ENCODE measurements at regions of chr19 and their contacts with region 1.

Region 1: GRCh38 chr19:12139885-12140547 is at the start of gene ZNF20:
- DNase-seq: peak; percentile 95
- H3K4me3 ChIP-seq: peak within 1 kb of the TSS; percentile 66 to 99
- H3K27ac ChIP-seq: peak within 1 kb of the TSS; percentile 83 to 89
- H3K4me1 ChIP-seq: peaks cover 0 to 8% of the 10 kb centered on the region in 2 experiments; a peak in 1 of 4 replicates
- H3K27me3 ChIP-seq: no peaks in the 10 kb centered on the region
- CTCF ChIP-seq: no peak
- EP300 ChIP-seq: no peak
- RAD21 ChIP-seq: no peak
- polyA plus RNA-seq, gene ZNF20: 1.8 and 1.9 TPM in 2 replicates

Region 2: DNA sequence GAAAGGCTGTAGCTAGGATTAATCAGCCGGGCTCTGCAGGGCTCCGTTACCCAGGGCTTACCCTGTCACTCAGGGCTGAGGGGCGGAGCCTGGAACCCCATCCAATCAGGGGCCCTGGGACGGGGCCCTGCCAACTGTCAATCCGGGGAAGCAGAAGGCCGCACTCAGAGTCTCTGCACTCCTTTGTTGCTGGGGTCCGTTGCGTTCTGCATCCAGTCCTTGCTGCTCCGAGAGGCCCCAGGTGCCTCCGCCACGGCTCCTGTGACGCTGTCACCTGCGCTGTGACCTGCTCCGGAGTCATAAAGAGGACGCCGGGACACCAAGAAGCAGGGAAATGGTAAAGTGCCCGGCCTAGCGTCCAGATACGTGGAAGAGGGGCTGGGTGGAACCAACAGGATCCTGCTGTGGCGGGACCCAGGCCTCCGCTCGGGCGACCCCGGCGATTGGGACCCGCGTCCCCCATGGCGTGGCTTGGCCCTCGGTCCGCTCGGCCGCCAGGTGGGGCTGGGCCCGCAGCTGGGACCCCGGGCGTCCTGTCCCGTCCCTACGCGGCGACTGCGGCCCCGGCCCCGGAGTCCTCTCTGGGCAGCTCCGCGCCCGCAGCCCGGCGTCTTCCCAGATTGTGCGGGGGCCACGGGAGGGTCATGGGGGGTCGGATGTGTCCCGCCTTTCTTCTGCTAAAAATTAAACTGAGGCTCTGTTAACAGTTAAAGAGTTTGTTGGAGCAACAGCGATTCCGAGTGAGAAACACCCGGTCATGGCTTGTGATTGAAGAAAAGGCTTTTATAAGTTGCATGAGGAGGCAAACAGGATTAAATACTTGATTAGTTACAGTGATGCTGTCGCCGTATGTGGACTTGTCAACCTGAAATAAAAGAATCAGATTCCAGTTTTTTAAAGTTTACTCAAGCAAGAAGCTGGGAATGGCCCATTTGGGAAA is 341.4 kb before region 1 on chr19 and contains the start of gene ZNF491:
- CTCF ChIA-PET with region 1: interaction called, 14 read pairs
- POLR2A ChIA-PET with region 1: interaction called, 3 read pairs
- DNase-seq: peak; percentile 98
- H3K4me3 ChIP-seq: peak within 1 kb of the TSS; percentile 73 to 76
- H3K27ac ChIP-seq: peak within 1 kb of the TSS; percentile 44 to 81; a peak in 3 of 4 replicates
- H3K4me1 ChIP-seq: peaks cover 0 to 7% of the 10 kb centered on the region in 2 experiments; a peak in 2 of 4 replicates
- H3K27me3 ChIP-seq: no peaks in the 10 kb centered on the region
- CTCF ChIP-seq: peak; percentile 41; the same call in 1 of the 2 replicates
- EP300 ChIP-seq: no peak
- RAD21 ChIP-seq: no peak; the same call in 1 of the 2 replicates
- polyA plus RNA-seq, gene ZNF491: 0.77 and 1.6 TPM in 2 replicates

Region 3: GRCh38 chr19:11924886-11925650 is 214.9 kb before region 1 on chr19 and contains the start of gene ZNF700:
- CTCF ChIA-PET with region 1: interaction called, 15 read pairs
- POLR2A ChIA-PET with region 1: interaction called, 3 read pairs
- DNase-seq: peak; percentile 94
- H3K4me3 ChIP-seq: peak within 1 kb of the TSS; percentile 72 to 95
- H3K27ac ChIP-seq: peak within 1 kb of the TSS; percentile 47 to 85; a peak in 3 of 4 replicates
- H3K4me1 ChIP-seq: peaks cover 0 to 2% of the 10 kb centered on the region in 2 experiments; a peak in 1 of 4 replicates
- H3K27me3 ChIP-seq: no peaks in the 10 kb centered on the region
- CTCF ChIP-seq: no peak
- EP300 ChIP-seq: no peak
- RAD21 ChIP-seq: no peak
- polyA plus RNA-seq, gene ZNF700: 3.5 and 4.4 TPM in 2 replicates

Region 4: DNA sequence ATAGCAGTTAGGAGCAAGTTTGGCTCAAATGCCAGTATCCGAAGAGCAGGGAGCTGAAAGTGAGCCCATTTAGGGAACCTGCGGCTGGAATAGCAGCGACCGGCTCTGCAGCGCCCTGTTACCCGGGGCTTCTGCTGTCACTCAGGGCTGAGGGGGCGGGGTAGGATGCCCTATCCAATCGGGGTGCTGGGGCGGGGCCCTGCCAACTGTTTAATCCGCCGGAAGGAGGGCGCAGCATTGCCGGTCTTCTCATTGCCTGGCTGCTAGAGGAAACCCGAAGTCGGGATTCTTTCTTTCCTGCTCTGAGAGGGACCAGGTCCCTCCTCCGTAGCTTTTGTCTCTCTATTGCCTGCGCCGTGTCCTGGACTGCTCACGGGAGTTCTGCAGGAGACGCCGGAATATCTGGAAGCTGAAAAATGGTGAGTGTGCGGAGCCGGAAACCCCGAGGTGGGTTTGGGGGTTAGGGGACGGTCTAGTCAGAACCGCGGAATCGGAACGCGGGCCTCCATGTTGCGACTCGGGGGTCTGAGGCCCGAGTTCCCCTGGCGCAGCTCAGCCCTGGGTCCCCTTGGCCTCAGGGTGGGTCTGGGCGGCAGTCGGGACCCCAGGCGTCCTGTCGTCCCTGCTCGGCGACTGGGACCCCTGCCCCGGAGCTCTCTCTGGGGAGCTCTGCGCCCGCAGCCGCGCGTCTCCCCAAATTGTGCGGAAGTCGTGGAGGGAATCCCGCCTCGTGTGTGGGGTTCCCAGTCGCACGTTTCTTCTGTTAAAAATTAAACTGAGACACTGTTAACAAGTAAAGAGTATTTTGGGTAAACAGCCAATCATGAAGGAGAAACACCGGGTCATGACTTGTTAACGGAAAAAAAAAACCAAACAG is 152.4 kb before region 1 on chr19:
- CTCF ChIA-PET with region 1: interaction called, 15 read pairs
- POLR2A ChIA-PET with region 1: no interaction called
- DNase-seq: peak; percentile 94
- H3K4me3 ChIP-seq: peak overlapping the region; percentile 88 to 93
- H3K27ac ChIP-seq: peak overlapping the region; percentile 67 to 86
- H3K4me1 ChIP-seq: no peaks in the 10 kb centered on the region; a peak in 1 of 4 replicates
- H3K27me3 ChIP-seq: no peaks in the 10 kb centered on the region
- CTCF ChIP-seq: no peak
- EP300 ChIP-seq: no peak
- RAD21 ChIP-seq: no peak

Region 5: DNA sequence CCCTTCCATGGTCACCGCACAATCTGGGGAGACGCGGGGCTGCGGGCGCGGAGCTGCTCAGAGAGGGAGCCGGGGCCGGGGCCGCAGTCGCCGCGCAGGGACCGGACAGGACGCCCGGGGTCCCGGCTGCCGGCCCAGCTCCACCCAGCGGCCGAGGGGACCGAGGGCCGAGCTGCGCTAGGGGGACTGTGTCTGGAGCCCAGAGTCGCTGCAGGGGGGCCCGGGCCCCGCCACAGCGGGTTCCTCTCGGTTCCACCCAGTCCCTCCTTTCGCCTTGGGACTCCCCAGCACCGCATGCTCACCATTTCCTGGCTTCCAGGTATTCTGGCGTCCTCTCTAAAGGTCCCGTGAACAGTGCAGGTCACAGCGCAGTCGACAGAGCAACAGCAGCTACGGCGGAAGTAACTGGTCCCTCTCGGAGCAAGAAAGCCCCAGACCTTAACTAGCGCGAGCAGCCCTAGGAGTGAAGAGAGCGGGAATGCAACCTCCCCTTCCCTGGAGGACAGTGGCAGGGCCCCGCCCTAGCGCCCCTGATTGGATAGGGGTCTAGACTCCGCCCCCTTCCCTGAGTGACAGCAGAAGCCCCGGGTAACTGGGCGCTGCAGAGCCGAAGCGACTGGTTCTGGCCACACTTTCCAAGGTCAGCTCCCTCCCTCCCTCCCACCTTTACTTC is 87.4 kb before region 1 on chr19 and contains the start of gene ZNF878:
- CTCF ChIA-PET with region 1: interaction called, 13 read pairs
- POLR2A ChIA-PET with region 1: interaction called, 8 read pairs
- DNase-seq: peak; percentile 96
- H3K4me3 ChIP-seq: peak within 1 kb of the TSS; percentile 58 to 69
- H3K27ac ChIP-seq: peak within 1 kb of the TSS in 1 of 2 experiments; percentile 66; a peak in 2 of 4 replicates
- H3K4me1 ChIP-seq: no peaks in the 10 kb centered on the region; a peak in 1 of 4 replicates
- H3K27me3 ChIP-seq: no peaks in the 10 kb centered on the region
- CTCF ChIP-seq: peak; percentile 33
- EP300 ChIP-seq: no peak
- RAD21 ChIP-seq: no peak
- polyA plus RNA-seq, gene ZNF878: 0.05 TPM in 1 of 2 replicates, not detected in the other

Region 6: DNA sequence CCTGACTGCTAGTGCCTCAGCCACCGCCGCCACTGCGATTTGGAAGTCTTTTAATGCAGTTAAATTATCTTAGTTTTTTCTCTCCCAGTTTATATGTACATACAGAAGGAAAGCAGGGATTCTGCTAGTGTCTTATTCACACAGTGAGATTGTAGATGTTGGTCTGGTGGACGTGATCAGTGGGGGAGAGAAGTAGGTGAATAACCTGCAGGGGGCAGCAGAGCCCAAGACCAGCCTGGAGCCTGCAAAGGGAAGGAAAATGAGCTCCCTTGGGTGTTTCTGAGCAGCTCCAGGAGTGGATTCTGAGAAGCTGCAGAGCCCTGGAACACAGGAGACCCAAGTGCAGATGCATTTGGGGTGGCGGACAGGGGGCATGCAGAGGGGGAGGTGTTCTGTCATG is 49.2 kb before region 1 on chr19:
- CTCF ChIA-PET with region 1: interaction called, 16 read pairs
- POLR2A ChIA-PET with region 1: no interaction called
- DNase-seq: peak; percentile 58
- H3K4me3 ChIP-seq: peak overlapping the region in 1 of 2 experiments; percentile 48; a peak in 1 of 4 replicates
- H3K27ac ChIP-seq: no peak overlapping the region
- H3K4me1 ChIP-seq: no peaks in the 10 kb centered on the region
- H3K27me3 ChIP-seq: no peaks in the 10 kb centered on the region
- CTCF ChIP-seq: peak; percentile 36
- EP300 ChIP-seq: no peak
- RAD21 ChIP-seq: peak; percentile 36

Region 7: GRCh38 chr19:12156223-12157058 is 16.4 kb after region 1 on chr19 and contains the start of gene ZNF625:
- CTCF ChIA-PET with region 1: interaction called, 34 read pairs
- POLR2A ChIA-PET with region 1: interaction called, 10 read pairs
- DNase-seq: peak; percentile 97
- H3K4me3 ChIP-seq: peak within 1 kb of the TSS; percentile 74 to 94
- H3K27ac ChIP-seq: peak within 1 kb of the TSS; percentile 61 to 86
- H3K4me1 ChIP-seq: peaks cover 0 to 8% of the 10 kb centered on the region in 2 experiments; a peak in 2 of 4 replicates
- H3K27me3 ChIP-seq: no peaks in the 10 kb centered on the region
- CTCF ChIP-seq: no peak
- EP300 ChIP-seq: no peak
- RAD21 ChIP-seq: no peak
- polyA plus RNA-seq, gene ZNF625: 1.9 and 2.3 TPM in 2 replicates

Measured in SK-N-SH (cell line).